Stomach (tissue), 19 donors: ENCODE measurements at regions of chr12 and their contacts with region 1.

Region 1: DNA sequence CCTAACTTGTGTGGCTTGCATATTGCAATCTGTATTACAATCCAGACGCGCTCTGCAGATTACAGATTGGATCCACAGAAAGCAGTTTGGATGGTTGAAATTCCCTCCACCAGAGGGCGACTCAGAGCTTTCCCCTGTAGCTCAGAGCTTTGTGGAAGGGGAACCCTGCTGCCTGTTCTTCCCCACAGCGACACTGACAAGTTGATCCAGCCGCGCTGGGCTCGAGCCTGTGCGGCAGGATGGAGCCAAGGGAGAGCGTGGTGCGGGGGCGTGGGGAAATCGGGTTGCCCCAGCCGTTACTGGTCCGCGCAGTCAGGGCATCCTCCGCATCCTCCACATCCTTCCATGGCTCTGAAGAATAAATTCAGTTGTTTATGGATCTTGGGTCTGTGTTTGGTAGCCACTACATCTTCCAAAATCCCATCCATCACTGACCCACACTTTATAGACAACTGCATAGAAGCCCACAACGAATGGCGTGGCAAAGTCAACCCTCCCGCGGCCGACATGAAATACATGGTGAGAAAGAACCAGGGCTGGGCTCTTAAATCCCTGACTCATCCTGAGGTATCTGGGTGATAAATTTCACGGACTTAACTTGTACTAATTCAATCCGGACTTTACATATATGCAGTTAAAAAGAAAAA is at the start of gene GLIPR1L1:
- DNase-seq: peak; percentile 89 to 94
- H3K4me3 ChIP-seq: peak within 1 kb of the TSS; percentile 36 to 45 (median 36)
- H3K27ac ChIP-seq: peak within 1 kb of the TSS in 1 of 5 donors; percentile 63
- H3K4me1 ChIP-seq: peaks cover 0 to 21% (median 14%) of the 10 kb centered on the region in 4 donors
- H3K27me3 ChIP-seq: no peaks in the 10 kb centered on the region
- CTCF ChIP-seq: peak in 5 of 7 experiments; percentile 63 to 90 (median 84)
- EP300 ChIP-seq: no peak
- POLR2A ChIP-seq: no peak
- total RNA-seq, gene GLIPR1L1: not detected

Region 2: DNA sequence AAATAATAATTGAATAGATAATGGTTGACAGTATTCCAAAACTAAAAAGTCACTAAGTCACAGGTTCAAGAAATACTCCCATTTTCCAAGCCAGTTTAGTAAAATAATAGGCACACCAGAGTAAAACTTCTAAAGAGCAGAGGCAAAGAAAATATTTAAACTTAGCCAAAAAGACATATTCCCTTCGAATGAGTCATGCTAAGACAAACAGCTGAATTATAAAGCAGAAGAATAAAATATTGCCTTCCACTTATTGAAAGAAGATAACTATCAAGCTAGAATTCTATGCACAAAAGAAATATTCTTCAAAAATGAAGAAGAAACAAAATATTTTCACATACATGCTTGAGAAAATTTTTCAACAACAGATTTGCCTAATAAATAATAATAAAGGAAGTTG is 109.0 kb before region 1 on chr12:
- intact Hi-C with region 1: no loop called
- DNase-seq: no peak
- H3K4me3 ChIP-seq: no peak overlapping the region
- H3K27ac ChIP-seq: no peak overlapping the region
- H3K4me1 ChIP-seq: no peaks in the 10 kb centered on the region
- H3K27me3 ChIP-seq: no peaks in the 10 kb centered on the region
- CTCF ChIP-seq: no peak
- EP300 ChIP-seq: no peak
- POLR2A ChIP-seq: no peak

Region 3: DNA sequence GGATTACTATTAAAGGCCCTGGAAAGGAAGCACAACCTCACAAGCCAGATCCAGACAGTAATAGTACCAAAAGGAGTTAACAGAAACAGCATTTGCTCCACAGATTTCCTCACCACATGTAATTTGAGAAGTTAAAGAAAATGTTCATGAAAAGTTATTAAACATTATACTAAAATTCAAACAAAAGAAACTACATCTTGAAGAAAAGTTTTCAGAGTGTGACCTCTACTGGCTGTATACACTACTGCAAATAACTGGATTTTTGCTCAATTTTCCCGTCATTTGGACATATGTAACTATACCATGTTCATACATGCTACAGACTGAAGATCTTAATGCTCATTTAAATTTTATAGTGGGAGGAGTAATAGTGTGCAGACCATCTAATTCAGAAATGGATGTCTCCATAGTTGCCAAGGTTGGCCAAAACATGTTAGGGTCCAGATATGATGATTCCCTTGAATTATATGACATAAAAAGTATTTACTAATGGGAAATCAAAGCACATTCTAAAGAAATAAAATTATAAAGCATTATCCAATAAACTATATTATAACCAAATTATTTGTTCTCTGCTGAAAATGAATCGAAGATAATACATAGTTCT is 171.3 kb after region 1 on chr12:
- intact Hi-C with region 1: loop called (anchors 10 kb)
- DNase-seq: peak in 1 of 2 donors; percentile 42
- H3K4me3 ChIP-seq: no peak overlapping the region
- H3K27ac ChIP-seq: no peak overlapping the region
- H3K4me1 ChIP-seq: peaks cover 8 to 37% (median 23%) of the 10 kb centered on the region in 4 donors
- H3K27me3 ChIP-seq: no peaks in the 10 kb centered on the region
- CTCF ChIP-seq: peak in 4 of 7 experiments; percentile 15 to 49 (median 30)
- EP300 ChIP-seq: no peak
- POLR2A ChIP-seq: no peak

Region 4: DNA sequence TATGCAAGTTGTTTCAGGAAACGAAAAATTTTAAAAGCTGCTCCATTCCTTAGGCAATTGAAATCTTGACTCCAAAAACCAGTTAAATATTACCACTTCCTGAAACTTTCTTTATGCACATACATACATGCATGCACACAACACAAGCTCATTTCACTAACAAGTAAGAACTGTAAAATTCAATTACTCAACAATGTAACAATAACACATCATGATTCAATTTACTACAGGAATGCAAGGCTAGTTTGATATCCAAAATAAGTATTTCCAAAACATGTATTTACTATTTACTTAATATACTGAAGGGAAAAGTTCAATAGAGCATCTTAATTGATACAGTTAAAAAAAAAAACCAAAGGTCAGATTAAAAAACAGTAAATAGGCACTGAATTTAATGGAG is 730.4 kb after region 1 on chr12:
- intact Hi-C with region 1: no loop called
- DNase-seq: no peak
- H3K4me3 ChIP-seq: no peak overlapping the region
- H3K27ac ChIP-seq: no peak overlapping the region
- H3K4me1 ChIP-seq: peaks cover 0 to 23% (median 7%) of the 10 kb centered on the region in 4 donors
- H3K27me3 ChIP-seq: no peaks in the 10 kb centered on the region
- CTCF ChIP-seq: no peak
- EP300 ChIP-seq: no peak
- POLR2A ChIP-seq: no peak